CD8-positive, alpha-beta T cell (primary cell): ENCODE measurements at regions of chr14 and their contacts with region 1.

Region 1: GRCh38 chr14:22271838-22272799 is 316.9 kb downstream of the DAD1 start:
- DNase-seq: peak in 1 of 9 experiments; percentile 49
- ATAC-seq: peak; percentile 38
- H3K4me3 ChIP-seq: peak overlapping the region in 1 of 2 experiments; percentile 7
- H3K4me3 Mint-ChIP-seq: peak overlapping the region; percentile 54
- H3K27ac ChIP-seq: no peak overlapping the region
- H3K27ac Mint-ChIP-seq: no peak overlapping the region
- H3K4me1 ChIP-seq: no peaks in the 10 kb centered on the region
- H3K4me1 Mint-ChIP-seq: peaks cover 4% of the 10 kb centered on the region
- H3K27me3 ChIP-seq: no peaks in the 10 kb centered on the region
- H3K27me3 Mint-ChIP-seq: no peaks in the 10 kb centered on the region
- CTCF ChIP-seq: no peak

Region 2: DNA sequence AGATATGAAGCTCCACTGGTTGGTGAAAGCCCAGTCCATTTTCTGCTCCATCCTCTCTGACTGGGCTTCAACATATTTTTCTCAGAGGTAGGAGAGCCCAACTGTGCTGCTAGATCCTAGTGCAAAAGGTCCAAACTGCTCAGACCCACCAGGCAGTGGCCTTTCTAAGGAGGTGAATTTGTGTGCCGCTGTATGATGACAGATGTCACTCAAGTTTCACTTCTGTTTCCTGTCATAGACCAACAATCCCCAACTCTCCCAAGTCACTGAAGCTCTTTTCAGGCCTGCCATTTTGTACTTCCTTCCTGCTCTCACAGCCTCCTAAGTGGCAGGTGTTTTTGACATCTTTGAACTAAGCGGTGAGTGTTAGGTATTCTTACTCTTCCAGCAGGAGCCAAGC is 1604.2 kb before region 1 on chr14:
- CTCF ChIA-PET with region 1: no interaction called
- POLR2A ChIA-PET with region 1: no interaction called
- intact Hi-C with region 1: no loop called
- DNase-seq: peak in 1 of 9 experiments; percentile 31
- ATAC-seq: no peak
- H3K4me3 ChIP-seq: no peak overlapping the region
- H3K4me3 Mint-ChIP-seq: no peak overlapping the region
- H3K27ac ChIP-seq: no peak overlapping the region
- H3K27ac Mint-ChIP-seq: peak overlapping the region; percentile 55
- H3K4me1 ChIP-seq: peaks cover 15% of the 10 kb centered on the region
- H3K4me1 Mint-ChIP-seq: peaks cover 23% of the 10 kb centered on the region
- H3K27me3 ChIP-seq: no peaks in the 10 kb centered on the region
- H3K27me3 Mint-ChIP-seq: peaks cover 10% of the 10 kb centered on the region
- CTCF ChIP-seq: no peak

Region 3: DNA sequence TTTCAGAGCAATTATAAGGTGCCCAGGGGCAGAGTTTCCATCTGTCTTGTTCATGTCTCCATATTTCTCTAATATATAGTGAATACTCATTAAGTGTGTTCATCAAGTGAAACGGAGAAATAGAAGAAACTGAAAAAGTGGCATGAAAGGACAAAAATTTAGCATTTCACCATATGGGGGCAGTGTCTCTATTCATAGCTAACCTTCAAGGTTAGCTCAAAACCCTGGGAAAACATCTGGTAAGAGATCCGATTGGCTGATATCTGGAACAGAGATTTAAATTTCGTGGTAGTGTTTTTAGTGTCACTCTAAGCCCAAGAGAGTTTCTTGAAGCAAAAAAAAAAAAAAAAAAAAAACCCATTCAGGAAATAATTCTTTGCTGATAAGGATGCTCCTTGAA is 50.6 kb before region 1 on chr14:
- CTCF ChIA-PET with region 1: no interaction called
- POLR2A ChIA-PET with region 1: no interaction called
- intact Hi-C with region 1: loop called in 1 of 2 experiments (anchors 5 kb)
- DNase-seq: peak in 2 of 9 experiments; percentile 21 to 51
- ATAC-seq: no peak
- H3K4me3 ChIP-seq: peak overlapping the region in 1 of 2 experiments; percentile 8
- H3K4me3 Mint-ChIP-seq: peak overlapping the region; percentile 50
- H3K27ac ChIP-seq: no peak overlapping the region
- H3K27ac Mint-ChIP-seq: no peak overlapping the region
- H3K4me1 ChIP-seq: peaks cover 4% of the 10 kb centered on the region
- H3K4me1 Mint-ChIP-seq: peaks cover 12% of the 10 kb centered on the region
- H3K27me3 ChIP-seq: no peaks in the 10 kb centered on the region
- H3K27me3 Mint-ChIP-seq: no peaks in the 10 kb centered on the region
- CTCF ChIP-seq: no peak